Sciatic nerve (tissue), 2 donors: ENCODE measurements at regions of chr1 and their contacts with region 1.

Region 1: GRCh38 chr1:210332719-210333398 is 4.2 kb downstream of the HHAT start:
- DNase-seq: no peak
- ATAC-seq: no peak

Region 2: DNA sequence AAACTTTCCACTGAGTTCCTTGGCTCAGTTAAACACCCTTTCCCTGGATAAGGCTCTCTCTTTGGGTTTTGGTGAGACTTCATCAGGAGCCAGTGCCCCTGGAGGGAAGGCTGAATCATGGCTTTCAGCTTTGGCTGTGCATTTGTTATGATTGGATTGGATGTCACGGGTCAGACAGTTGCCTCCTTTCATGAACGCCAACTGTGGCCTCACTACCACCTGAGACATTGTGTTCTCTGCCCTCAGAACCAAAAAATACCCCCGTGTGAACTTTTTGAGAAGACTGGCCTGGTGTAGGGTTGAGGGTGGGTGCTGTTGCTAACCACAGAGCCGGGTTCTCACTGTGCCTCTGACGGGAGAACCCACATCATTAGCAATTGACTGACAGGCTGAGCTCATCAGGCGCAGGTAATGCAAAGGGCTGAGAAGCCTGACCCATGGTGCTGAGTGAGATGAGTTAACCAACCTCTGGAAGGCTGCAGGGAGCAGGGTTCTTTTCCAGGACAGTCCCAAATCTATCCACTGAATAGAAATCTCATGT is 61.5 kb after region 1 on chr1:
- intact Hi-C with region 1: loop called (anchors 10 kb)
- DNase-seq: no peak
- ATAC-seq: peak; percentile 64